ENCODE measurements at regions of chr12 and their contacts with region 1.

Region 1: DNA sequence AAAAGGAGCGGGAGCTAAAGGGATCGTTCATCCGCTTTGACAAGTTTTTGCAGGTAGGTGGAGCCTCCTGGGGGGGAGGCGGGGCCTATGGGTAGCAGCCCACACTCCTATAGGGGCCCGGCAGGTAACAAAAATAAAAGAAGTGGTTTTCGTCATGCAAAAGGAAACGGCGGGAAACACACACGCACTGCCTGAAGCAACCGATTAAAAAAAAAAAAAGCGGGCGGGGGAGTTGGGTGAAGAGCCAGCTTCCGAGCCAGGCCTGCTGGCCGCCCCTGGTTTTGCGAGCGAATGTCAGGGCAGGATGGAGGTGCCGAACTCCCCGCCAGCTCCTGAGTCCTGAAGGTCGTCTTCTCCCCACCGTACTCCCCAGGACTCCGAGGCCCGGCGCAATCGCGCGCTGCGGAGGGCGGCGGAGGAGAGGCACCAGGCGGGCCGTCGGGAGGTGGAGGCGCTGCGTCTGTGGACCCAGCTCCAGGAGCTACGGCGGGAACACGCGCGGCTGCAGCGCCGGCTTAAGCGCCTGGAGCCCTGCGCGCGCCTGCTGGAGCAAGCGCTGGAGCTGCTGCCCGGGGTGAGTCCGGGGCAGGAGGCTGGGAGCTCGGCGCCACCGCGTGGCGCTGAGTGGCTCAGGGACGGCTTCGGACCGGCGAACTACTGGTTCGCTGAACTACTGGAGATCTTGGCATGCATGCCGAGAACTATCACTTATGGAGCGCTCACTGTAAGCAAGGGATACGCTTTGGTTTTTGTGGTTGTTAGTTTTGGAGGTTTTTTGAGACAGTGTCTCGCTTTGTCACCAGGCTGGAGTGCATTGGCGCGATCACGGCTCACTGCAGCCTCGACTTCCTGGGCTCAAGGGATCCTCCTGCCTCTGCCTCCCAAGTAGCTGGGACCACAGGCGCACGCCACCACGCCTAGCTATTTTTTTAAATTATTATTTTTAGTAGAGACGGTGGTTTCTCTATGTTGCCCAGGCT is 3.6 kb downstream of the CFAP73 start:
- DNase-seq: peak; percentile 76
- H3K4me3 Mint-ChIP-seq: peak overlapping the region; percentile 65
- H3K27ac Mint-ChIP-seq: no peak overlapping the region
- H3K4me1 Mint-ChIP-seq: peaks cover 12% of the 10 kb centered on the region
- H3K27me3 Mint-ChIP-seq: peaks cover 14% of the 10 kb centered on the region
- CTCF ChIP-seq: peak; percentile 38

Region 2: GRCh38 chr12:112906712-112907414 is 246.3 kb before region 1 on chr12 and contains the start of gene OAS1:
- CTCF ChIA-PET with region 1: no interaction called
- POLR2A ChIA-PET with region 1: no interaction called
- intact Hi-C with region 1: loop called (anchors 10 kb)
- DNase-seq: peak; percentile 74
- H3K4me3 Mint-ChIP-seq: peak within 1 kb of the TSS; percentile 73
- H3K27ac Mint-ChIP-seq: peak within 1 kb of the TSS; percentile 72
- H3K4me1 Mint-ChIP-seq: peaks cover 44% of the 10 kb centered on the region
- H3K27me3 Mint-ChIP-seq: no peaks in the 10 kb centered on the region
- CTCF ChIP-seq: no peak
- total RNA-seq, gene OAS1: 1.3 and 1.5 TPM in 2 replicates

Region 3: DNA sequence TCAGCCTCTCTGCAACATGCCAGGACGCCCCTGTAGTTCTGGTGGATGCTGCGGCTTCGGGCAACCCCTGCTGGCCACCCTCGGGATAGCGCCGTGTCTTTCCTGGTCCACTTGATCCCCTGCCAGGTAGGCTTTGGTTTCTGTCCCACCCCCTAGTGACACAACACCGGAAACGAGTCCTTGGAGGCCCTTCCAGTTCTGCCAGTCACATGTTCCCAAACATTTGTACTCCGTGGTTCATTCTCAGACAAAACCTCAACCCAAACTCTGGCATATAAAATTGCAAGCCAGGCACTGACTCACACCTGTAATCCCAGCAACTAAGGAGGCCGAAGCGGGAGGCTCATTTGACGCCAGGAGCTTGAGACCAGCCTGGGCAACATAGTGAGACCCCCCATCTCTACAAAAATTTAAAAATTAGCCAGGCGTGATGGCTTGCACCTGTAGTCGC is 54.7 kb before region 1 on chr12:
- CTCF ChIA-PET with region 1: interaction called, 3 read pairs
- POLR2A ChIA-PET with region 1: no interaction called
- intact Hi-C with region 1: loop called (anchors 1 kb)
- DNase-seq: peak; percentile 97
- H3K4me3 Mint-ChIP-seq: peak overlapping the region; percentile 10
- H3K27ac Mint-ChIP-seq: no peak overlapping the region
- H3K4me1 Mint-ChIP-seq: no peaks in the 10 kb centered on the region
- H3K27me3 Mint-ChIP-seq: no peaks in the 10 kb centered on the region
- CTCF ChIP-seq: peak; percentile 90

Region 4: GRCh38 chr12:113174461-113175384 is 21.6 kb after region 1 on chr12:
- CTCF ChIA-PET with region 1: interaction called, 33 read pairs
- POLR2A ChIA-PET with region 1: no interaction called
- intact Hi-C with region 1: no loop called
- DNase-seq: peak; percentile 67
- H3K4me3 Mint-ChIP-seq: no peak overlapping the region
- H3K27ac Mint-ChIP-seq: peak overlapping the region; percentile 14
- H3K4me1 Mint-ChIP-seq: peaks cover 5% of the 10 kb centered on the region
- H3K27me3 Mint-ChIP-seq: no peaks in the 10 kb centered on the region
- CTCF ChIP-seq: peak; percentile 96

Region 5: DNA sequence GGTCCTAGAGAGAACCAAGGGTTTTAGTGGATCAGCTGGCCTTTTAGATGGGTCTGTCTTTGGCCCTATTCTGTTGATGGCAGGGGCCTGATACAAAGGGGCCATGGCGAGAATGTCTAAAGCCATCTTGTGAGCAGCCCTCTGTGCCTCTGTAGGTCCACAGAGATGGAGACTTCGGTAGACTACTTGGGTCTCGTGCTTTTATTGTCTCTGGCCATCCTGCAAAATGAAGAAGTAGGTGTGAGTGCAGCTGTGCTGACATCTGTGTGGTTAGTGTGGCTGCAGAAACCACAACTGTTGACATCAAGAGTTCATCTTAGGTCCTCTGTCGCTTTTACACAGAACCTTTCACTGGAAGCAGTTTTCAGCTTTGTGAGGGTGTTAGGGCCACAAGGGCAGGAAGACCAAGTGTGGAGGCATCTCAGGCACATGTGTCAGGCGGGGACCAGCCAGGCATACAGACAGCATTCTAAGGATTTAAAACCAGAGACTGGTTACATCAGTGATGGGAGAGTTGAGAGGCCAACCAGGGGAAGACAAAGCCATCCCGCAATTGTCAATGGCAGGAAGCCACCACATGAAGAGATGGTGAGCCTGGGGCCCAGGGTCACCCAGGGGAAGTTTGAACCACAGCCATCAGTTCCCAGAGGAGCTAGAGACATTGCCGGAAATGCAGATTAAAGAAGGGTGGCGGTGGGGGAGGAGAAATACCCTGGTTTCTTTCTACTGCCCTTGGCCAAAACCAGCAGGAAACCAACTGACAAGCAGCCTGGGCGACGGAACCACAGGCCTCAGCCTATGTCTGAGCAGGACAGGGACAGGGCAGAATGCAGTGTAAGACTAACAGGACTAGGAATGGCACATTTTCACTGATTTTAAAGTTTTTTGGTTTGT is 55.2 kb after region 1 on chr12:
- CTCF ChIA-PET with region 1: no interaction called
- POLR2A ChIA-PET with region 1: no interaction called
- intact Hi-C with region 1: no loop called
- DNase-seq: no peak
- H3K4me3 Mint-ChIP-seq: no peak overlapping the region
- H3K27ac Mint-ChIP-seq: no peak overlapping the region
- H3K4me1 Mint-ChIP-seq: no peaks in the 10 kb centered on the region
- H3K27me3 Mint-ChIP-seq: no peaks in the 10 kb centered on the region
- CTCF ChIP-seq: no peak